Activated CD4-positive, alpha-beta T cell treated with anti-CD3 and anti-CD28 coated beads for 36 hours (primary cell): ENCODE measurements at regions of chr4 and their contacts with region 1.

Region 1: DNA sequence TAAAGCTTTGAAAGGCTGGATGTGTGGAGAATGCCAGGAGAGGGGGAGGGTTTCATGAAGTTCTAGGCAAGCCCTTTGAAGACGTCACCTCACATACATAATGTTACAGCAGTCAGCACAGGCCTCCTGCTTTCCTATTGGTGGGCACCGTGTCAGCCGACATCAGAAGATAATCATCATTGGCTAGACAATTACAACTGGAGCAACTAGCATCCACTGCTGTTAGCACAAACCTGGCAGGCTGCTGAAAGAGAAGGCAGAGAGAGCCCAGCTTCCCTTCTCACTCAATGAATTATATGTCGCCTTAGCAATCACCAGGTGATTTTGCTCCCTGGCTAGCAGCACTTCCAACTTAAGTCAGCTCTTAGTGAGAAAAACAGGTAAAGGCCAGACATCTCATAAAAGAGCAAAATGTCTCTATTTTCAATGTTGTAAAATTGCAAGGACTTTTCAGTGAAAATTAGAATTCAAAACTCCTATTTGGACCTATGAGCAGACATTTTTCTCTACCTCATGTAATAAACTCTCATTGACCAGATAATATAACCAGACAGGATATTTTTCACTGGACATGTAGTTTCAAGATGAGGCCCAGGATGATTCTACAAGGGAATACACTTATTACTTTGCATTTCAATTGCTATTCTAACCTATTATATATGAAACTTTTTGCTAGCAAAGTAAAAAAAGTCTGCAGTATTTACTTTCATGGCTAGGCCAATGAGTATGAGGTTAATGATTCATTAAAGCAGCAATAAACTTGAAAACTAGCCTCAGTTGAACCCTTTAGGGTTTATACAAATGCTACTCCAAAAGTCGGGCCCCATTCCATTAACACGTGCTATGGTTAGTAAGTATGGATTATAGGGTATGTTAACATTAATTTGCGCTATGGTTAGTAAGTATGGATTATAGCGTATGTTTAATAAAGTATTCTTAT is 4.3 kb downstream of the ELOVL6 start:
- DNase-seq: peak; percentile 88
- ATAC-seq: peak; percentile 87
- H3K4me3 Mint-ChIP-seq: peak overlapping the region; percentile 54
- H3K27ac Mint-ChIP-seq: peak overlapping the region; percentile 87
- H3K4me1 Mint-ChIP-seq: peaks cover 37% of the 10 kb centered on the region
- H3K27me3 Mint-ChIP-seq: no peaks in the 10 kb centered on the region

Region 2: DNA sequence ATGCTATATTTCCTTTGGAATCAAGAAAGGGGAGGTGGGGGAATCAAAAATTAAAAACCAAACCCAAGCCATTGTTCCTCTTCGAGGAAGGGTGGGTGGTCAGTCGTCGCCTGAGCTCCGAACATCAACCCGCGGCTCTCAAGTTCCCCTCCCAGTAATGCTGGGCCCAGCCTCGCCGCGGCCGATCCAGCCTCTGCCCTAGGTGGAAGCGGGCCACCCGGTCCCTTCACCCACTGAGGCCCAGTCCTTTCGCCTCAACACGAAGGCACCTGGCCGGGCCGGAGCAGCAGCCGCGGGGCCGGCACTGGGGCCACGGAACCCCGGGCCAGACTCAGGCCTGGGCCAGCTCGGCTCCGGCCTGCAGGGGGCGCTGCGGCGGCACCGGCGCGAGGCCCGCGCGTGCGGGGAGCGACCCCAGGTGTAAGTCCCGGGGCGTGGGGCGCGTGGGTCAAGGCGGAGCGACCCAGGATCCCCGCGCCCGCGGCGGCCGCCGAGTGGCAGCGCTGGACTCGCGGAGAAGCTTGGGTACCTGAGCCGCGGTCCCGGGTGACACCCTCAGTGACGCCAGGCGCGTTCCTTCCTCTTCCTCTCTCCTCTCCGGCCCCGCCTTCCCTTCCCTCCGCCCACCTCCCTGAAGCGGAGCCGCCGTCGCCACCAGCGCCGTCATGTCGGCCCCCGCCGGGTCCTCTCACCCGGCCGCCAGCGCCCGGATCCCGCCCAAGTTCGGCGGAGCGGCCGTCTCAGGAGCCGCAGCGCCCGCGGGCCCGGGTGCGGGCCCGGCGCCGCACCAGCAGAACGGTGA is 760.7 kb before region 1 on chr4 and contains the start of gene SEC24B:
- CTCF ChIA-PET with region 1: no interaction called
- POLR2A ChIA-PET with region 1: no interaction called
- intact Hi-C with region 1: loop called (anchors 5 to 10 kb)
- DNase-seq: peak; percentile 94
- ATAC-seq: peak; percentile 82
- H3K4me3 Mint-ChIP-seq: peak within 1 kb of the TSS; percentile 83
- H3K27ac Mint-ChIP-seq: peak within 1 kb of the TSS; percentile 93
- H3K4me1 Mint-ChIP-seq: peaks cover 61% of the 10 kb centered on the region
- H3K27me3 Mint-ChIP-seq: no peaks in the 10 kb centered on the region
- total RNA-seq, gene SEC24B: 24.6 to 35.9 TPM

Region 3: DNA sequence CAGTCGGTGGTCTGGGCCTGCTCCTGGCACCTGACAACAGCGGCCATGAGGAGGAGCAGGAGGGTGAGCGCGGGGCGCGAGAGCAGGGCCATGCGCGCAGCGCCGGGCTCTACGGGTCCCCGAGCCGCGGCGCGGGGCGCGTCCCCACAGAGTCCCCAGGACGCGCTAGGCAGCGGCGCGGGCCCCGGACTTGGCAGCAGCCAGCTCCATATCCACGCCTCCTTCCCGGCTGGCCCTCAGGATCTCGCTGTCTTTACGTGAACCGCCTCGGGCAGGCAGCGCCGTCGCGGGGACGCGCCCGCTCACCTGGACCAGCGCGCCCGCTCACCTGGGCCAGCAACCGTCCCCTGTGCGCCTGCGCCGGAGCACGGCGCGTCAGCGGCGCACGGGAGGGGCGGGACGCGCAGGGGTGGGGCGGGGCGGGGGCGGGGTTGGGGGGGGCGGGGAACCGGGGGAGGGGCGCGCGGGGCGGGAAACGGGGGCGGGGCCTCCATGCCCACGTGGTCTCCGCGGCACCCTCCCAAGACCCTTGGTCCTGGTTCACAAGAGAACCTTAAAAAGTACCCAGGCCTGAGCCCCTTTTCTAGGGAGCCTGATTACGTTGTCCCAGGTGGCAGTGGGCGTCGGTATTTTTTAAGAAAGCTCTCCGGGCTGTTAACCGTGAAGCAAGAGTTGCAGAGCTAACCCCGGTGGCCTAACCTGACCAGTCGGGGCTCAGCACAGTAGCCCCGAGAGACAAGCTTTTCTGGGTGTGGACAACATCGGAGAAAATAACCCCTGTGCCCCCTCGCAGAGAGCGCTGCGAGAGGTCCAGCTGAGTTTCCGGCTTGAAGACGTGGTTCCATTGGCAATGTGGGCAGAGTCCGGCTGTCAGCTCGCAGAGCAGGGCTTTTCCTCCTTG is 464.1 kb before region 1 on chr4 and contains the start of gene PLA2G12A:
- CTCF ChIA-PET with region 1: no interaction called
- POLR2A ChIA-PET with region 1: no interaction called
- intact Hi-C with region 1: loop called in 1 of 2 experiments (anchors 5 kb)
- DNase-seq: peak; percentile 85
- ATAC-seq: peak; percentile 87
- H3K4me3 Mint-ChIP-seq: peak within 1 kb of the TSS; percentile 84
- H3K27ac Mint-ChIP-seq: peak within 1 kb of the TSS; percentile 71
- H3K4me1 Mint-ChIP-seq: peaks cover 14% of the 10 kb centered on the region
- H3K27me3 Mint-ChIP-seq: no peaks in the 10 kb centered on the region
- total RNA-seq, gene PLA2G12A: 17.9 to 31.1 TPM

Region 4: GRCh38 chr4:110005461-110006056 is 188.5 kb before region 1 on chr4:
- CTCF ChIA-PET with region 1: no interaction called
- POLR2A ChIA-PET with region 1: no interaction called
- intact Hi-C with region 1: loop called (anchors 5 kb)
- DNase-seq: no peak
- ATAC-seq: peak; percentile 60
- H3K4me3 Mint-ChIP-seq: no peak overlapping the region
- H3K27ac Mint-ChIP-seq: no peak overlapping the region
- H3K4me1 Mint-ChIP-seq: no peaks in the 10 kb centered on the region
- H3K27me3 Mint-ChIP-seq: no peaks in the 10 kb centered on the region

Region 5: DNA sequence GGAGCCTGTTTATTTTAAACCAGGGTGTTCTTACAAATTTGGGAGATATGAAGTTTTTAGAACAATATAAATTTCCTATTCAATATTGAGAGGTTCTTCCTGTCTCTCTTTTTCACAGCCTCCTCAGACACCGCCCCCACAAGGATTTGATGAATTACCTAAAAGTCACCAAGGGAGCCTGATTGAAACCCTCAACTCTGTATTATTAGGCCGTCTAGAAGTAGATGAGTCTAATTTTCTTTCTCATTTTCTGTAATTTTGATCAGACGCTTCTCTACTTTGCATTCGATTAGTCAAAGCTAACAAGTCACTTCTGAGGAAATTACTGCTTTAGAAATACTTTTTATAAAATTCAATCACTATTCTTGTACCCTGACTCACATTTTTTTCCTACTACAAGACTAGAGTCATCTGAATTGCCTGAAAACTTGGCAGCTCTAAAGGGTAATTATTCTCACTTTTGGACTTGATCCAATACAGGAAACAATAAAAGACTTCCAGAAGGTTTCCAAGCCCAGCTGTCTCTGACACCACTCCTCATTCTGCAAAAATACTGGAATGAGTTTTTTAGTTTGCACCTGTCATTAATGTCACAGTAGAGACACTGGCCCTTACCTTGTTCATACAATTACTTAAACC is 106.9 kb before region 1 on chr4:
- CTCF ChIA-PET with region 1: no interaction called
- POLR2A ChIA-PET with region 1: no interaction called
- intact Hi-C with region 1: loop called (anchors 2 kb)
- DNase-seq: peak; percentile 12
- ATAC-seq: peak; percentile 40
- H3K4me3 Mint-ChIP-seq: no peak overlapping the region
- H3K27ac Mint-ChIP-seq: peak overlapping the region; percentile 96
- H3K4me1 Mint-ChIP-seq: peaks cover 68% of the 10 kb centered on the region
- H3K27me3 Mint-ChIP-seq: no peaks in the 10 kb centered on the region

Region 6: GRCh38 chr4:110516106-110516922 is 322.2 kb after region 1 on chr4:
- CTCF ChIA-PET with region 1: interaction called, 3 read pairs
- POLR2A ChIA-PET with region 1: no interaction called
- intact Hi-C with region 1: loop called in 1 of 2 experiments (anchors 5 kb)
- DNase-seq: peak; percentile 83
- ATAC-seq: peak; percentile 90
- H3K4me3 Mint-ChIP-seq: peak overlapping the region; percentile 87
- H3K27ac Mint-ChIP-seq: peak overlapping the region; percentile 48
- H3K4me1 Mint-ChIP-seq: peaks cover 15% of the 10 kb centered on the region
- H3K27me3 Mint-ChIP-seq: peaks cover 10% of the 10 kb centered on the region

Region 7: GRCh38 chr4:110550260-110550659 is 356.2 kb after region 1 on chr4:
- CTCF ChIA-PET with region 1: no interaction called
- POLR2A ChIA-PET with region 1: no interaction called
- intact Hi-C with region 1: no loop called
- DNase-seq: no peak
- ATAC-seq: no peak
- H3K4me3 Mint-ChIP-seq: no peak overlapping the region
- H3K27ac Mint-ChIP-seq: no peak overlapping the region
- H3K4me1 Mint-ChIP-seq: no peaks in the 10 kb centered on the region
- H3K27me3 Mint-ChIP-seq: peaks cover 20% of the 10 kb centered on the region